ENCODE measurements at regions of chr6 and their contacts with region 1.

Region 1: DNA sequence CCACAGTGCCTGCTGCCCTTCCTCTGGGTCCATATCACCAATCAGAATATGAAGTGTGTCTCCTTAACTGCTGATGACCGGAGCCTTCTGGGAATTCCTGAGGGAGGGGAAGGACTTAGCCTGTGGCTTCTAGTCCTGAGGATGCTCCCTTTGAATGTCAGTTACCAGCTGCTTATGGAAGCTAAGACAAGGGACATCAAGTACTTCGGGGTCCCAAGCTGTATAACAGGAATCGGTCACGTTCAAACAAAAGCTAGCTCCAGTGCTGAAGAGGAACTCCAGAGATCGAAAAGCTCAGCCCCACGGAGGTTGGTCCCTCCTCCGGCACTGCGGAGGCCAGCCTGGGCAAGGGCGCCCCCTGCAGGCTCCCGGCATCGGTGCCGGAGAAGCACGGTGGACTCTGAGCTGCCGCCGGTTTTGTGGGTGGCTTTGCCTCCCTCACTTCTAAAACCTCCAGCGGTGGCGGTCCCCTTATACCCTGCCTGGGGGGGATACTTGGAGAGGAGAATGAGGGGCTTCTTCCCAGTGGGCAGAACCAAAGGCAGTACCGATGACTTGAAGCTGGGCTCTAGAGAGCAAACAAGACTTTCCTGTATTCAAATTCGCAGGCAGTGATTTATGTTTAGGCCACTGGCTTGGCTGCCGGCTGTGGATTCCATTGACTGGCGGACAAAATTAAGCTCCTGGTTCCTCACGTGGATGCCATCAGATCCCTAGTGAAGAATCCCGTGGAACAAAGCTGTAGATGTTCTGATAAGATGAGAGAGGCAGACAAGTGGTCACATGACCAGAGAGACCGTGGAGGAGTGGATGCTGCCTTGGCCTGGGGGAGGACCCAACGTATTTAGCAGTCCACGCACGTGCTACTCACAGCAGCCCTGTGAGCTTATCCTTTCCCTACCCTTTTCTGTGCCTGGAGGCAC is 16.2 kb upstream of the UBR2 start:
- DNase-seq: peak; percentile 75 to 87 (median 82)
- H3K4me3 ChIP-seq: peak overlapping the region; percentile 62
- H3K4me3 Mint-ChIP-seq: peak overlapping the region in 6 of 7 donors; percentile 66 to 74 (median 70)
- H3K27ac ChIP-seq: no peak overlapping the region
- H3K27ac Mint-ChIP-seq: peak overlapping the region in 4 of 8 donors; percentile 47 to 86 (median 59)
- H3K4me1 ChIP-seq: peaks cover 11% of the 10 kb centered on the region
- H3K4me1 Mint-ChIP-seq: peaks cover 6 to 12% (median 12%) of the 10 kb centered on the region in 3 donors
- H3K27me3 ChIP-seq: no peaks in the 10 kb centered on the region
- H3K27me3 Mint-ChIP-seq: peaks cover 2 to 5% of the 10 kb centered on the region in 2 donors

Region 2: GRCh38 chr6:42217519-42218367 is 329.9 kb before region 1 on chr6 and contains the start of gene MRPS10:
- CTCF ChIA-PET with region 1: interaction called, 22 read pairs
- POLR2A ChIA-PET with region 1: interaction called, 4 read pairs
- DNase-seq: peak; percentile 84 to 94 (median 86)
- H3K4me3 ChIP-seq: peak within 1 kb of the TSS; percentile 99
- H3K4me3 Mint-ChIP-seq: peak within 1 kb of the TSS; percentile 95 to 100 (median 98)
- H3K27ac ChIP-seq: peak within 1 kb of the TSS; percentile 82
- H3K27ac Mint-ChIP-seq: peak within 1 kb of the TSS; percentile 72 to 98 (median 96)
- H3K4me1 ChIP-seq: peaks cover 24% of the 10 kb centered on the region
- H3K4me1 Mint-ChIP-seq: peaks cover 28 to 38% (median 29%) of the 10 kb centered on the region in 3 donors
- H3K27me3 ChIP-seq: no peaks in the 10 kb centered on the region
- H3K27me3 Mint-ChIP-seq: peaks cover 0 to 2% of the 10 kb centered on the region in 2 donors
- total RNA-seq, gene MRPS10: 51.3 to 51.8 TPM

Region 3: DNA sequence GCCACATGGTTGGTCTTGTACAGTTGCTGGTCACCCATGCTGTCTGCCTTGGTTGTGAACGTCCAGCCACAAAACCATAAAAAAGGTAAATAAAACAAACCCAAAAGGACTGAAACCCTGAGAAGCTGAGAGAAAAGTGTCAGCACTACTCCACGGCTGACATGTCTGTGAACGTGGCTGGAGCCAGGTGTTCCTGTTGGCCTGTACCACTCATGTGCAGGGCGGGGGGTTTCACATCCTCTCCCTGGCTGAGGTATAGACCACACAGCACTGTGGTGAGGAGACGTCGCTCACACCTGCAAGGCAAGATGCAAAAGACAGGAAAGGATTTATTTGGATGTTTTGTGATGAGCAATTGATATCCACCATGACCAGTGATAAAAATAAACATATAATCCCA is 278.1 kb before region 1 on chr6:
- CTCF ChIA-PET with region 1: interaction called, 17 read pairs
- POLR2A ChIA-PET with region 1: no interaction called
- DNase-seq: peak in 3 of 5 donors; percentile 45 to 62 (median 54)
- H3K4me3 ChIP-seq: no peak overlapping the region
- H3K4me3 Mint-ChIP-seq: peak overlapping the region in 2 of 7 donors; percentile 20 to 49
- H3K27ac ChIP-seq: no peak overlapping the region
- H3K27ac Mint-ChIP-seq: peak overlapping the region; percentile 68 to 95 (median 80)
- H3K4me1 ChIP-seq: no peaks in the 10 kb centered on the region
- H3K4me1 Mint-ChIP-seq: peaks cover 25 to 29% (median 26%) of the 10 kb centered on the region in 3 donors
- H3K27me3 ChIP-seq: no peaks in the 10 kb centered on the region
- H3K27me3 Mint-ChIP-seq: peaks cover 0 to 4% of the 10 kb centered on the region in 2 donors

Region 4: GRCh38 chr6:42313941-42314570 is 233.6 kb before region 1 on chr6:
- CTCF ChIA-PET with region 1: interaction called, 16 read pairs
- POLR2A ChIA-PET with region 1: no interaction called
- DNase-seq: no peak
- H3K4me3 ChIP-seq: no peak overlapping the region
- H3K4me3 Mint-ChIP-seq: no peak overlapping the region
- H3K27ac ChIP-seq: no peak overlapping the region
- H3K27ac Mint-ChIP-seq: peak overlapping the region; percentile 9 to 90 (median 36)
- H3K4me1 ChIP-seq: peaks cover 30% of the 10 kb centered on the region
- H3K4me1 Mint-ChIP-seq: peaks cover 57 to 77% (median 68%) of the 10 kb centered on the region in 3 donors
- H3K27me3 ChIP-seq: no peaks in the 10 kb centered on the region
- H3K27me3 Mint-ChIP-seq: peaks cover 0 to 1% of the 10 kb centered on the region in 2 donors

Region 5: DNA sequence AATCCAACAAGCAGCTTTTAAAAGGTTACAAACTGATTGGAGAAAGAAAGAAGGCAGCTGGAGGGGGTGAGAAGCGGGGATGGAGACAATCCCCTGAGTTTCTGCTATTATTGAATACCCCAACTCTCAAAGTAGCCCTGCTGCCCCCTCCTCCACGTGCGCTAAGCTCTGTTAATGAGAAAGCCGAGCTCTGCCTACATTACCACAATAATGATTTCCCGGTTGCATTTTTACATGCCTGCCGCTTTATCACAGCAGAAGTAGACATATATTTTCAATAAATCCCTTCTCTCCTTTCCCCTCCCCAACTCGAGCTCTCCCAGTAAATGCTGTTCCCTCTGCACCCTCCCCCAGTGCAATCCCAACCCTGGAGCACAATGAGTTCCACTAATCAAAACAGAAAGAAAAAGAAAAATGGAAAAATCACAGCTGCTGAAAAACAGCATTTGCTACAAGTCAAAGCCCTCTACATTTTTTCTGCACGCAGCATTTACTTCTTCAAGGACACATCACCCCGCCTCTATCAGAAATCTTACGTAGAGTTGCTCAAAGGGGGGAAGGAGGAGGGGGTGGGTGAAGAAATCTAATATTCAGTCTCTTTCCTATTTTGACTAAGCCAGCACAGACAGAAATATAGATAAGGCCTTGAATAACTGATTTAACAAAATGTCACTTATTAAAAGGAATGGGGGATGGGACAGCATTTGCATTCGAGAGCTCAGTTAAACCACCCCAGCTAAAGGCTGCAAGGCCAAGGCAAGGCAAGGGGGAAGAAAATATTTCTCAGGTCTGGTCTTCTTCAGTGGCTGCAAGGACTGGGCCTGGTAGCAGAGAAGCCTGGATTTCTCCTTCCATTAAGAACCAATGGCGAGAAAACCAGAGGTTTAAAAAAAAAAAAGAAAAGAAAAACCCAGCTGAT is 106.6 kb before region 1 on chr6:
- CTCF ChIA-PET with region 1: interaction called, 12 read pairs
- POLR2A ChIA-PET with region 1: no interaction called
- DNase-seq: no peak
- H3K4me3 ChIP-seq: no peak overlapping the region
- H3K4me3 Mint-ChIP-seq: peak overlapping the region; percentile 3 to 86 (median 75)
- H3K27ac ChIP-seq: no peak overlapping the region
- H3K27ac Mint-ChIP-seq: peak overlapping the region; percentile 69 to 97 (median 85)
- H3K4me1 ChIP-seq: peaks cover 48% of the 10 kb centered on the region
- H3K4me1 Mint-ChIP-seq: peaks cover 67 to 87% (median 84%) of the 10 kb centered on the region in 3 donors
- H3K27me3 ChIP-seq: no peaks in the 10 kb centered on the region
- H3K27me3 Mint-ChIP-seq: peaks cover 0 to 3% of the 10 kb centered on the region in 2 donors

Region 6: GRCh38 chr6:42563697-42564505 is 16.2 kb after region 1 on chr6 and contains the start of gene UBR2:
- CTCF ChIA-PET with region 1: interaction called, 53 read pairs
- POLR2A ChIA-PET with region 1: interaction called, 5 read pairs
- DNase-seq: peak; percentile 83 to 95 (median 92)
- H3K4me3 ChIP-seq: peak within 1 kb of the TSS; percentile 98
- H3K4me3 Mint-ChIP-seq: peak within 1 kb of the TSS; percentile 92 to 100 (median 98)
- H3K27ac ChIP-seq: peak within 1 kb of the TSS; percentile 93
- H3K27ac Mint-ChIP-seq: peak within 1 kb of the TSS; percentile 84 to 100 (median 95)
- H3K4me1 ChIP-seq: peaks cover 19% of the 10 kb centered on the region
- H3K4me1 Mint-ChIP-seq: peaks cover 27 to 46% (median 38%) of the 10 kb centered on the region in 3 donors
- H3K27me3 ChIP-seq: no peaks in the 10 kb centered on the region
- H3K27me3 Mint-ChIP-seq: no peaks in the 10 kb centered on the region
- total RNA-seq, gene UBR2: 26.2 to 27.0 TPM

Region 7: GRCh38 chr6:42664718-42665117 is 117.0 kb after region 1 on chr6:
- CTCF ChIA-PET with region 1: no interaction called
- POLR2A ChIA-PET with region 1: no interaction called
- DNase-seq: no peak
- H3K4me3 ChIP-seq: no peak overlapping the region
- H3K4me3 Mint-ChIP-seq: no peak overlapping the region
- H3K27ac ChIP-seq: no peak overlapping the region
- H3K27ac Mint-ChIP-seq: no peak overlapping the region
- H3K4me1 ChIP-seq: no peaks in the 10 kb centered on the region
- H3K4me1 Mint-ChIP-seq: peaks cover 0 to 5% (median 0%) of the 10 kb centered on the region in 3 donors
- H3K27me3 ChIP-seq: no peaks in the 10 kb centered on the region
- H3K27me3 Mint-ChIP-seq: no peaks in the 10 kb centered on the region

Measured in CD8-positive, alpha-beta memory T cell (primary cell).